Head of caudate nucleus (tissue), 42 donors: ENCODE measurements at regions of chr19 and their contacts with region 1.

Region 1: GRCh38 chr19:18152444-18152816 is 533 bp upstream of the PIK3R2 start:
- DNase-seq: peak; percentile 85 to 98 (median 94)

Region 2: DNA sequence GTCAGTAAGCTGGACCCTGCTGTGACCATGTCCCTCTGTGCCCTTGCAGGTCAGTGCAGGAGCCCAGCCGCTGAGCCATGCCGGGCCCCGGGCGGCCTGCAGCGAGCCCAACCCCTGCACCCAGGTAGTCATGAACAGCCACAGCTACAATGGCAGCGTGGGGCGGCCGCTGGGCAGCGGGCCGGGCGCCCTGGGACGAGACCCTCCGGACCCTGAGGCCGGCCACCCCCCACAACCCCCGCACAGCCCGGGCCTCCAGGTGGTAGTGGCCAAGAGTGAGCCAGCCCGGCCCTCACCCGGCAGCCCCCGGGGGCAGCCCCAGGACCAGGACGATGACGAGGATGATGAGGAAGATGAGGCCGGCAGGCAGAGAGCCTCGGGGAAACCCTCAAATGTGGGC is 178.7 kb before region 1 on chr19:
- intact Hi-C with region 1: no loop called
- DNase-seq: no peak

Region 3: GRCh38 chr19:18007044-18007916 is 145.2 kb before region 1 on chr19:
- intact Hi-C with region 1: loop called (anchors 5 kb)
- DNase-seq: peak; percentile 71 to 95 (median 89)

Region 4: DNA sequence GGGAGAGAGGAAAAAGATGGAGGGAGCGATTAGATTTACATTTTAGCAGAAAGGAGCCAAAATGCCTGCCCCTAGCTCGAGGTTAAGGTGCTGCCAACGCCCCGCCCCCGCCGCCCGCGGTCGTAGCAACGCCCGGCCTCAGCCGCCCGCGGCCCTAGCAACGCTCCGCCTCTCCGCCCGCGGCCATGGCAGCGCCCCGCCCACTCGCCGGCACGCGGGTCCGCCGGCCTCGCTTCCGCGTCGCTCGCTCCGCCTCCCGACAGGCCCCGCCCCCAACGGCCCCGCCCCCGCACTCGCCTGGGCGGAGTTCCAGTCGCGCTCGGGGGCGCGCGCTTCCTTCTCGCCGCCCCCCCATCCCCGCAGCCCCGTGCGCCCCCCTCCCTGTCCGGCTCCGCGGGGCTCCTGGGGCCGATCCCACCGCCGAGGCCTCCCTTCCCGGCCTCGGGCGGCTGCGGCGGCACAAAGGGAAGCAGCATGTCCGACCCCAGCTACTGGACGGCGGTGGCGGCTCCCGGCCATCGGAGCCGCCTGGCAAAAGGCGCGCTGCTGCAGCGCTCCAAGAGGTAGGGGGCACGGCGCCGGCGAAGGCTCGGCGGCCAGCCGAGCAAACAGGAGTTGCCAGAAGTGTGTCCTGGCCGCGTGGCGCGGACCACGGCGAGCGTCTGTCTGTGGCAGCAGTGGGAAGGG is 34.6 kb before region 1 on chr19:
- intact Hi-C with region 1: loop called (anchors 5 kb)
- DNase-seq: peak; percentile 58 to 98 (median 92)